ENCODE measurements at regions of chr4 and their contacts with region 1.

Region 1: GRCh38 chr4:2472187-2472586 is 3.3 kb downstream of the RNF4 start:
- DNase-seq: no peak
- H3K4me3 ChIP-seq: no peak overlapping the region
- H3K27ac ChIP-seq: no peak overlapping the region
- H3K4me1 ChIP-seq: peaks cover 16 to 41% of the 10 kb centered on the region in 2 donors
- H3K27me3 ChIP-seq: no peaks in the 10 kb centered on the region
- CTCF ChIP-seq: no peak
- POLR2A ChIP-seq: no peak

Region 2: DNA sequence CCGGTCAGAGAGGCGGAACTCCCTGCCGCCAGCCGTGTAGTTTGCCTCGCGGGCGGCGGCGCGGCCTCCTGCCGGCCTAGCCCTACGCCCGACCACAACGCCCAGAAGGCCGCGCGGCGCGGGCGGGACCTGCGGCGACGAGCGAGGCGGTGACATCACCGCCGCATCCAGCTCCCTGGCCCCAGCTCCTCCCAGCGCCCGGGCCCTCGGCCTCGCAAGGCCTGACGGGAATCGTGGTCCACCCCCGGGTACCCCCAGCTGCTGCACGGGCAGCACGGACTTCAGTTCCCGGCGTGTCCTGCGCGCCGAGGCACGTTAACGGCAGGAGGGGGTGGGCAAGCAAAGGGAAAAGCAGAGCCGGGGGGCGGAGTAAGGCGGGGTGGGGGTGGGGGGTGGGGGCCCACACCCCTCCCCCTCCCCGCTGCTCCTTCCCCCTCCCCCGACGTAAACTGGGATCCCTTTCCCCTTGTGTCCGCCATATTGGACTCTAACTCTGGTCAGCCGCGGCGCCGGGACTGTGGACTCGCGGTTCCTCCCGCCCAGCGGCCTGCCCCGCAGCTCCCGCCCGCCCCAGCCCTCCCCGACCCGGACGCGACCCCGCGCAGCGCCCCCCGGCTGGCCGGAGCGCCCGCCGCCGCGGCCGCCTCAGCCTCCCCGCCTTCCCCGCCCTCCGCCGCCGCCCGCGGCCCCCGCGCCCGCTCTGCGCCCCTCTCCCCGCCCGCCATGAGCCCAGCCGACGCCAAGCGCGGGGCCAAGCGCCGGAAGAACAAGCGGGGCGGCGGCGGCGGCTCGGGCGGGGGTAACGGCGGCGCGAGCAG is 64.2 kb after region 1 on chr4 and contains the start of gene FAM193A:
- intact Hi-C with region 1: loop called in 1 of 2 experiments (anchors 10 kb)
- DNase-seq: peak; percentile 99 to 100 (median 99)
- H3K4me3 ChIP-seq: peak within 1 kb of the TSS; percentile 45 to 99 (median 92)
- H3K27ac ChIP-seq: peak within 1 kb of the TSS; percentile 46 to 100 (median 90)
- H3K4me1 ChIP-seq: peaks cover 22 to 23% of the 10 kb centered on the region in 2 donors
- H3K27me3 ChIP-seq: no peaks in the 10 kb centered on the region
- CTCF ChIP-seq: peak in 2 of 6 experiments; percentile 13 to 16
- POLR2A ChIP-seq: peak in 1 of 2 donors; percentile 76
- total RNA-seq, gene FAM193A: 13.8 to 30.8 (median 23.3) TPM